ENCODE measurements at regions of chr2 and their contacts with region 1.

Region 1: GRCh38 chr2:222844323-222844722 is 16.5 kb upstream of the ACSL3 start:
- DNase-seq: no peak
- ATAC-seq: peak; percentile 26

Region 2: DNA sequence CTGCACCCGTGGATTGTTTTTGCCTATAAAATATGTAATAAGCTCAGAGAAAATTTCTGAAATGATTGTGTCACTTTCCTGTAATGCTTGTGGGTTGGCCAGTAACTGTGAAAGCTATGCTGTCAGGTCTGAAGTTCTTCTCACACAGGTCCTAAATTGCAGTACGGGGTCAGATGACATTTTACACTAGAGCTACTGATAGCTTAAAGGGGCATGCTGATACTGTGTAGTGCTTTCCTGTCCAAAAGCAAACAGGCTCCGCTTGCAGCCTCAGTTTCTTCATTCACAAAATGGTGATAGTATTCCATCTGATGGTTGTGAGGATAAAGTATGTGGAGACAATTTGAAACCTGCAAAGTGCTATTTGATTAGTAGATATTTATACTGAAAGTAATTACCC is 180.8 kb before region 1 on chr2:
- intact Hi-C with region 1: no loop called
- DNase-seq: no peak
- ATAC-seq: peak; percentile 89

Region 3: DNA sequence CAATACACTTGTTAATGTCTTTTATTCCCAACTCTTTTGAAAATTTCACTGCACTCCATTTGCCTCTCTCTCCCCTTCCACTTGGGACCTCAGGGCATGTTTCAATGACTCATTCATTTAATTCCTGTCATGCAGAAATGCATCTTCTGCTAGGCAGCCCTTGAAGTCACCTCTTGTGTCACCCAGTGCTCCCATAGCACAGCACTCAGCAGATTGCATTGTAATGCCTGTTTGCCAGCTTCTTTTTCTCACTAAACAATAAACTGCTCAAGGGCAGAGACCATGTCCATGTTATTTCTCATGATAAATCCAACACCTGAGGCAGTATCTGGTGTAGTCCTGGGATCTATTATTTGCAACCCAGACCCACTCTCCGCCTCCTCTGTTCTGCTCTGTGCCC is 69.4 kb before region 1 on chr2:
- intact Hi-C with region 1: no loop called
- DNase-seq: no peak
- ATAC-seq: peak; percentile 35

Region 4: DNA sequence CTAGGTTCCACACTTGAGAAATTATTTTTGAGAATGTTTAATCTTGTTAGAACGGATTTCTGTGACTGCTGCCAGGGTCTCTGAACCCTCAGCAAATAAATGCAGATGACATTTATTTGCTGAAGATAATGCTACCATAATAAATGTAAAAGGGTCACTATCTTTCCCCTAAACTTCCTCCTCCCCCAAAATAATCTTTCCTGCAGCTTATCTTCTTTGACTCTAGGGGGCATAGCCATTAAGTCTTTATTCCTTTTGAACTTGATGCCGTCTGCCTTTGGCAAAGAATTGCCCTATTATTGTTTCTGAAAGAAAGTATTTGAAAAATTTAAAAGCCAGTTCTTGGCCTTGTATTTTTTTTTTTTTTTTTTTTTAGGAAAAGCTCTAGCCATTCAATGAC is 47.1 kb before region 1 on chr2:
- intact Hi-C with region 1: loop called (anchors 10 kb)
- DNase-seq: no peak
- ATAC-seq: no peak

Region 5: GRCh38 chr2:222813177-222813843 is 31.0 kb before region 1 on chr2:
- intact Hi-C with region 1: no loop called
- DNase-seq: no peak
- ATAC-seq: no peak

Measured in left ventricle myocardium superior (tissue), 1 donor.